Dendritic cell treated with granulocyte-macrophage colony-stimulating factor and Interleukin-4, amounts not matched to agents 40 ng/mL and 50 ng/mL, for 4 days (primary cell): ENCODE measurements at regions of chr17 and their contacts with region 1.

Region 1: DNA sequence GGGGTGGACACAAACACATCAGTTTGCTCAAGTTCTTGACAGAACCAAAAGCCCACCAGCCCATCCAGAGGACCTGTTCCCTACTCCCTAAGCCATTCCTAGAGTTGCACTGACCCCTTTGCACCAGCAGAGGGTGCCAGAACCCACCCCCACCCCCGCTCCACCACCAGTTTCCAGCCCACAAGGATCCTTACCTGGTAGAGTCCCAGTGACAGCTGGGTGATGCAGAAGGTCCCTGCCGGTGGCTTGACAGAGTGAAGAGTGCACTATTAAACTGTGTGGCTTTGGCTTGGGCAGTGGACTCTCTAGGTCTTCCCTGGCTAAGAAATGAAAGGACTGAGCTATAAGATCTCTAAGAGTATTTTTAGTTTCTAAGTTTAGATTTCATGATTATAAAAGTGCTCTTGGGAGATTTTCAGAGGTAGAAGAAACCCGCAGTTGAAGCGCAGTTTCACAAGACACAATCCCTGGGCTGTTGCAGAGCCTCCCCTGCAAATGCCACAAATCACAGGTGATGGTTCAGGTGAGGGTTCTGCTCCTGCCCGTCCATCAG is 73.3 kb upstream of the MTMR4 start:
- H3K4me3 Mint-ChIP-seq: no peak overlapping the region
- H3K27ac Mint-ChIP-seq: no peak overlapping the region
- H3K4me1 Mint-ChIP-seq: no peaks in the 10 kb centered on the region
- H3K27me3 Mint-ChIP-seq: peaks cover 6% of the 10 kb centered on the region

Region 2: GRCh38 chr17:58517734-58518609 is 69.8 kb before region 1 on chr17:
- intact Hi-C with region 1: loop called (anchors 1 kb)
- H3K4me3 Mint-ChIP-seq: peak overlapping the region; percentile 85
- H3K27ac Mint-ChIP-seq: peak overlapping the region; percentile 97
- H3K4me1 Mint-ChIP-seq: peaks cover 47% of the 10 kb centered on the region
- H3K27me3 Mint-ChIP-seq: peaks cover 10% of the 10 kb centered on the region

Region 3: GRCh38 chr17:58541249-58541648 is 46.5 kb before region 1 on chr17:
- intact Hi-C with region 1: no loop called
- H3K4me3 Mint-ChIP-seq: no peak overlapping the region
- H3K27ac Mint-ChIP-seq: no peak overlapping the region
- H3K4me1 Mint-ChIP-seq: peaks cover 20% of the 10 kb centered on the region
- H3K27me3 Mint-ChIP-seq: peaks cover 26% of the 10 kb centered on the region

Region 4: DNA sequence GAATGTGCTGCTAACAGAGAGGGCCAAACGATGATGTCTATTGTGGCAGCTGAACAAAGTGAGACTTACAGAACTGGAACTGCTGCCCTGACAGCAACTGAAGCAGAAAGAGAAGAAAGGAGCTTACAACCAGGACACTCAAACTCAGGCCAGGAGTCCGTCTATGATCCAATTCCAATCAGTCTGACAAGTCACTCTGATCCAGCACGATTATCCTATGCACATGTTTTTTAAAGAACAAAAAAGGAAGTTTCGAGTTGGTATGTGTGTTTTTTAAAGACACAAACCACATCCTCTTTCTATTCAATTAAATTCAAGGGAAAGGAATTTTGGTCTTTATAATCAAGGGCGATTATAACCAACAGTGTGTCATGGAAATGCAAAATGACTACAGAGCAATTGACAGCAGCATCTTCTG is 30.9 kb before region 1 on chr17:
- intact Hi-C with region 1: no loop called
- H3K4me3 Mint-ChIP-seq: no peak overlapping the region
- H3K27ac Mint-ChIP-seq: peak overlapping the region; percentile 46
- H3K4me1 Mint-ChIP-seq: peaks cover 17% of the 10 kb centered on the region
- H3K27me3 Mint-ChIP-seq: peaks cover 15% of the 10 kb centered on the region

Region 5: DNA sequence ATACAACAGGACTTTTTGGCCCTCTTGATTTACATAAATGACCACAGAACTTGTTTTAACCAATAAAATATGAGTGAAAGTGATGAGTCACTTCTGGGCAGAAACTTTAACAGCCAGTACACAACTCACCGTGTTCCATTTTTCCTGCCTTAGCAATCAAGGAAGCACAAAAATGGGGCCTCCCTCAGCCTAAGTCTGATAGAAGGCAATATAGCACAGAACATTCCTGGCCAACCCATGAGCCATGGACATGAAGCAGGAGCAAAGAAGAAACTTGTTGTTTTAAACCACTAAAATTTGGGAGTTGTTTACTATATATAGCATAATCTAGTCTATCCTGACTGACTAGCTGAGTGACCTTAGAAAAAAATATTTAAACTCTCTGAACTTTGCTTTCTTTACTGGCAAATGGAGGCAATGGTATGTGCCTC is 12.2 kb before region 1 on chr17:
- intact Hi-C with region 1: no loop called
- H3K4me3 Mint-ChIP-seq: no peak overlapping the region
- H3K27ac Mint-ChIP-seq: no peak overlapping the region
- H3K4me1 Mint-ChIP-seq: peaks cover 8% of the 10 kb centered on the region
- H3K27me3 Mint-ChIP-seq: no peaks in the 10 kb centered on the region

Region 6: DNA sequence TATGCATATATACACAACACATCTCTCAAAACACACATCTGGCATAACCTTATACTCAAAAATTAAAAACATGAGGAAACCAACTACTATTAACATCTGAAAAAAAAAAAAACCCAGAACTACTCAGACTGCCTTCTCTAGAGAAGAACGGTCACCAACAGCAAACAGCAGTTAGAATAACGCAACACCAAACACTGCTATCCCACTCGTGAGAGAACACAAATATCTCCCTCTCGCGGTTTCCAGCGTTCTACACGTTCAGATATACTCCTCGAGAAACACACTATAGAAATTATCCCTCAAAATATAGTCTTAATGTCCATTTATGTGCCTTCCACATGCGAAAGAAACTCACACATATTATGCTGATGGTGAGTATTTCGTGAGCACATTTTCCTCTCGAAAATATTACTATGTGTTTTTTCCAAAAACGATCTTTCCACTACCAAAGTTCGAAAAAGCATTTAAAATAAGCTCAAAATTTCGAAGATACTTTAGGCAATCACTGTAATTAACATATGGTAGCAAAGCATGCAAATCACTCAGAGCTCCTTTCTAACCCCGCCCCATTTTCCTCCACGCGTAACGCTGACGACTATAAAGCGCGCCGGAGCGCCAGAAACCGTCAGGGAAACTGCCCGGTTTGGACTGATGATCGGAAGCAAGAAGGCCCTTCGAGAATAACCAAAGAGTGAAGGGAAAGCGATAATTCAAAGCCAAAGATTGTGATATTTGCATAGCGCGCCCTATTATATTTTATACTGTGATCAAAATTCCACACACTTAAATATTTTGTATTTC is 43.9 kb after region 1 on chr17:
- intact Hi-C with region 1: loop called (anchors 5 kb)
- H3K4me3 Mint-ChIP-seq: no peak overlapping the region
- H3K27ac Mint-ChIP-seq: no peak overlapping the region
- H3K4me1 Mint-ChIP-seq: peaks cover 25% of the 10 kb centered on the region
- H3K27me3 Mint-ChIP-seq: peaks cover 2% of the 10 kb centered on the region

Region 7: DNA sequence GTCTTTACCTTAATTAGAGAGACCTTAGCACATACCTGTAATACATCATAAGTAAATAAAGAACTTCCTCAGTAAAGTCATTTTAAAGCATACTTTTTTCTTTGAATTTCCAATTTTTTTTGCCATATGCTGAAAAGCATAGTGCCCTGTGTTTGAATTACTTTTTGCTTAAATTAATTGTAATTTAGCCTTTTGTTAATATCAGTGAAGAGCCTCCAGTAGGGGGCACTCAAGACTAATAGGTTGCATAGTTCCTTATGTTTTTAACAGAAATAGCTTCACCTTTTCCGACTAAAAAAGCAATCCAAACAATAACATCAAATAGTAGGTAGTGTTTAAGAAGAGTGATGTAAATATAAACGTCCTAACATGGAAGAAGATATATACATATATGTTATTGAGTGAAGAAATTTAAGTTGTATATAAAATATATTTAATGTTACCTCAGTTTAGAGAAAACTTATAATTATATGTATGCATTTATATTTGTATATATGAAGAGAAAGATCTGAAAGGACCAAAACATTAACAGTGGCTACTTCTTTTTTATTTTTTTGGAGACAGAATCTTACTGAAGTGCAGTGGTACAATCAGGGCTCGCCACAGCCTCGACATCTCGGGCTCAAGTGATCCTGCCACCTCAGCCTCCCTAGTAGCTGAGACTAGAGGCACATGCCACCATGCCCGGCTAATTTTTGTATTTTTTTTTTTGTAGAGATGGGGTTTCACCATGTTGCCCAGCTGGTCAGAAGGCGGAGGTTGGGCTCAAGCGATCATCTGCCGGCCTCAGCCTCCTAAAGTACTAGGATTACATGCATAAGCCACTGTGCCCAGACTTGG is 123.4 kb after region 1 on chr17:
- intact Hi-C with region 1: loop called (anchors 10 kb)
- H3K4me3 Mint-ChIP-seq: no peak overlapping the region
- H3K27ac Mint-ChIP-seq: no peak overlapping the region
- H3K4me1 Mint-ChIP-seq: peaks cover 10% of the 10 kb centered on the region
- H3K27me3 Mint-ChIP-seq: no peaks in the 10 kb centered on the region

Region 8: GRCh38 chr17:58943848-58944565 is 356.2 kb after region 1 on chr17:
- intact Hi-C with region 1: no loop called
- H3K4me3 Mint-ChIP-seq: peak overlapping the region; percentile 23
- H3K27ac Mint-ChIP-seq: peak overlapping the region; percentile 25
- H3K4me1 Mint-ChIP-seq: peaks cover 32% of the 10 kb centered on the region
- H3K27me3 Mint-ChIP-seq: peaks cover 3% of the 10 kb centered on the region

Region 9: DNA sequence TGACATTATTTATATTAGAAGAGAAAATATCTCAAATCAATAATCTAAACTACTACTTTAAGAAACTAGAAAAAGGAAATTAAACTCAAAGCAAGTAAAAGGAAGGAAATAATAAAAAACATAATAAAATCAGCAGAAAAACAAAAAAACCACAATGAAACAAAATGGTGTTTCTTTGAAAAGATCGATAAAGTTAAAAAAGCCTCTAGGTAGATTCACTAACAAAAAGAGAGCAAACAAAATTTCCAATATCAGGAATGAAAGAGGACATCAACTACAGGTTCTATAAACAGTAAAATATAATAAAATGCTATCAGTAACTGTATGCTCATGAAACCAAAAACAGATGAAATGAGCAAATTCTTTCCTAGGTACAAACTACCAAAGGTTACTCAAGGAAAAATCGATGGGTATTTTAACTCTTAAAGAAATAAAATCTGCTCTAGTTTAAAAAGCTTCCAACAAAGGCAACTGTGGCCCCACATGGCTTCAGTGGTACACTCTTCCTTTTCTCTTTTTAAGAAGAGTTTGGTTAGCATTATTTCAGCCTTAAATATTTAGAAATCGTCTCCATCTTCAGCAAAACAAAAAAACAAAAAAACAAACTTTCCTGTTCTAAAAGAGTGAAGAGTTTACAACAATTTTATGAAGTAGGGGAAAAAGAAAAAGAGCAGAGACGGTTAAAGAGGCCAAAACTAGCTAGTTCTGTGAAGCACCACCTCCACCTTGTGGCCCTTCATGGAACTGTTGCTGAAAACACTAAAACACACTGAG is 416.7 kb after region 1 on chr17:
- intact Hi-C with region 1: loop called (anchors 1 kb)
- H3K4me3 Mint-ChIP-seq: no peak overlapping the region
- H3K27ac Mint-ChIP-seq: no peak overlapping the region
- H3K4me1 Mint-ChIP-seq: peaks cover 24% of the 10 kb centered on the region
- H3K27me3 Mint-ChIP-seq: no peaks in the 10 kb centered on the region